A549 (cell line): ENCODE measurements at regions of chr10 and their contacts with region 1.

Region 1: DNA sequence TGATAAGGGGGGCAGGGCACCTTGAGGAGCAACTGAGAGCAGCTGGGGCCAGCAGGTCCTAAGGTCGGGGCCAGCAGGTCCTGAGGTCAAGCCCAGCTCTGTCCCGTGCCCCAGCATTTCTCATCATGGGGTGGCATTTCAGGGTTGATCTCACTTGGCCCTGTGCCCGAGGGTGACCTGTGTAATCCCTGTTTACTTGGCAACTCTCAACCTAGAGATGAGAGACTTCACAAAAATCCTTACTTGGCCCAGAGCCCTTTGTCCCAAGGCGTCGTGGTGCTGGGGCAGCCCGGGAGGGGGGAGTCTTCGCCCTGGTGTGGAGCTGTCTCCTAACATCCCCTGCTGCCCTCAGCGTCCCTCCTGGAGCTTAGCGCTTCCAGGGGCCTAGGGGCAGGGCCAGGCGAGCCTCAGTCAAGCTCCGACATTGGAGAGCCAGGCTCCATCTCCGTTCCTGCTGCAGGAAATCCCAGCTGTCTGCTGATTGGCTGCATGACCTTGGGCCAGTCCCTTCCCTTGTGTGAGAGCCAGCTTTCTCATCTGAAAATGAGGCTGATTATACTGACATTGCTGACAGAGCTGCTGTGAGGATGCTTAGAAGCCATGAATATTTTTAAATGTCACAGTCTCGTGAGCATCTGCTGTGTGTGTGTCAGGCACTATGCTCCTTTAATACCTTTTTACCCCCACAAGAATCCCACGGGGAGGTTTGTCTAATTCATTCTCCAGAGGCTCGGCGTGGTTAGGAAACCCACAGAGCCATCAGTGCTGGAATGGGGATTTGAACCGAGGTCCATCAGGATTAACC is 94.3 kb downstream of the ZMIZ1 start:
- DNase-seq: peak; percentile 64 to 79
- ATAC-seq: peak; percentile 37 to 58
- H3K4me3 ChIP-seq: no peak overlapping the region
- H3K27ac ChIP-seq: peak overlapping the region; percentile 98 to 99
- H3K4me1 ChIP-seq: peaks cover 82% of the 10 kb centered on the region
- CTCF ChIP-seq: no peak
- EP300 ChIP-seq: peak; percentile 35 to 73; a peak in 2 of 5 replicates
- POLR2A ChIP-seq: no peak
- RAD21 ChIP-seq: peak; percentile 15 to 33; a peak in 2 of 5 replicates

Region 2: DNA sequence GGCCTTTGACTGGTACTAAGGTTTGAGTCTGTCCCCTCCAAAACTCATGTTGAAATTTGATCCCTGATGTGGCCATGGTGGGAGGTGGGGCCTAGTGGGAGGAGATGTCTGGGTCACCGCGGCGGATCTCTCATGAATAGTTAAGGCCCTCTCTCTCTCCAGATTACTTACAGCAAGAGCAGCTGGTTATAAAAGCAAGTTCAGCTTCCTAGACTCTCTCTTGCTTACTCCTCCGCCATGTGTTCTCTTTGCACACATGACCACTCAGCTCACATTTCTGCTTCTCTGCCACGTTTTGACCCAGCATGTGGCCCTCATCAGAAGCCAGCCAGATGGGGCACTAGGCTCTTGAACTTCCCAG is 124.2 kb before region 1 on chr10:
- CTCF ChIA-PET with region 1: no interaction called
- POLR2A ChIA-PET with region 1: no interaction called
- DNase-seq: no peak
- ATAC-seq: no peak
- H3K4me3 ChIP-seq: no peak overlapping the region
- H3K27ac ChIP-seq: no peak overlapping the region
- H3K4me1 ChIP-seq: no peaks in the 10 kb centered on the region
- CTCF ChIP-seq: no peak
- EP300 ChIP-seq: no peak
- POLR2A ChIP-seq: no peak
- RAD21 ChIP-seq: no peak

Region 3: GRCh38 chr10:79149662-79150443 is 13.2 kb before region 1 on chr10:
- CTCF ChIA-PET with region 1: interaction called, 17 read pairs
- POLR2A ChIA-PET with region 1: interaction called, 7 read pairs
- DNase-seq: peak; percentile 91 to 97
- ATAC-seq: peak; percentile 62 to 82
- H3K4me3 ChIP-seq: no peak overlapping the region
- H3K27ac ChIP-seq: peak overlapping the region; percentile 98 to 99
- H3K4me1 ChIP-seq: peaks cover 99% of the 10 kb centered on the region
- CTCF ChIP-seq: no peak
- EP300 ChIP-seq: peak; percentile 72 to 83; a peak in 2 of 5 replicates
- POLR2A ChIP-seq: 0 out of 2 replicates have a peak, but pooled peaks have one; percentile 8
- RAD21 ChIP-seq: peak in 1 of 2 experiments; percentile 59; a peak in 4 of 5 replicates

Region 4: DNA sequence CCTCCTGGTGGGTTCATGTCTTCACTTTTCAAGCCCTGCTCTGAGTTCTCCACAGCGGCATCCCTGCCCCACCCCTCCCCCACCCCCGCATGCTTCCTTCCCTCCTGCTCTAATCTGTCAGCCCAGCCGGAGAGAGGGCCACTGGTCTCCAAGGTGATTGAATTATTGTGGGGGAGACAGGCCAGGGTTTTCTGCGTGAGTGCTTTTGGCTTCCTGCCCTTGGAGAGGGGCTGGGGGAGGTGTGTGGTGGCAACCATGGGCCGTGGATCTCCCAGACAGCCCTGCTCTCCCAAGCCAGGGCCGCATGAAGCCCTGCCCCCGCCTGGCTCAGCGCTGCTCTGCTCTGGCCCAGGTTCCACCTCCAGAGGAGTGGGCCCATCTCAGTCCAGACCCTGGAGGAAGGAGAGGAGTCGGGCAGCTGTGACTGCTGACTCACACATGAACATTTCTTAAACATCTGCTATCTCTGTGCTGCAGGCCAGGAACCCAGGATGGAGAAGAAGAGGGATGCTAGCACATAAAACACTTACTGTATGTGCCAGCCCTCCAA is 15.6 kb after region 1 on chr10:
- CTCF ChIA-PET with region 1: interaction called, 32 read pairs
- POLR2A ChIA-PET with region 1: interaction called, 3 read pairs
- DNase-seq: no peak
- ATAC-seq: peak; percentile 4 to 28; a peak in 3 of 6 replicates
- H3K4me3 ChIP-seq: no peak overlapping the region
- H3K27ac ChIP-seq: peak overlapping the region; percentile 66 to 90
- H3K4me1 ChIP-seq: peaks cover 100% of the 10 kb centered on the region
- CTCF ChIP-seq: no peak
- EP300 ChIP-seq: no peak
- POLR2A ChIP-seq: no peak
- RAD21 ChIP-seq: no peak